Activated CD4-positive, alpha-beta T cell treated with anti-CD3 and anti-CD28 coated beads, Interleukin-2, amount 10 ng/mL, durations not matched to agents 24 days and 14 days (primary cell): ENCODE measurements at regions of chr12 and their contacts with region 1.

Region 1: DNA sequence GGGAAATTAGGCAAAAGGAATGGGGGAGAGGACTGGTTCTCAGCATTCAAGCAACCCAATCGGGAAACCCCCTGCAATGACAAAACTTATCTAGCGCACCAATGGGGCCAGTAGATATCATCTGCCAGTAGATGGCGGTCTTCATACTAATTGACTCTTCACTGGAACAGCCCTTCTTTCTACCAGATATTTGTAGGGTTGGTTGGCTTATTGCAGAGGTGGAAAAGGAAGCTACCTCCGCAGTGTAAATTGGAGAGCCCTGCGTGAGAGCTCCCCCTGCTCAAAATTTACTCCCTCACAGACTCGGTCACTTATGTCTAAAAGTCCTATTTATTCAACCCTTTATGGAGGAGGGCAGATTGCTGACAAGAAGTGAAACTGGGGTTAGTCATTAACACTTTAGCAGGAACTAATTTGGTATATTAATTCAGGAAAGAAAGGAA is 166.1 kb upstream of the CCND2 start:
- DNase-seq: peak; percentile 93
- H3K4me3 Mint-ChIP-seq: peak overlapping the region; percentile 47
- H3K27ac Mint-ChIP-seq: peak overlapping the region; percentile 83
- H3K4me1 Mint-ChIP-seq: peaks cover 42% of the 10 kb centered on the region
- H3K27me3 Mint-ChIP-seq: peaks cover 2% of the 10 kb centered on the region

Region 2: GRCh38 chr12:3998968-3999826 is 108.3 kb before region 1 on chr12:
- intact Hi-C with region 1: loop called (anchors 2 kb)
- DNase-seq: no peak
- H3K4me3 Mint-ChIP-seq: no peak overlapping the region
- H3K27ac Mint-ChIP-seq: no peak overlapping the region
- H3K4me1 Mint-ChIP-seq: peaks cover 5% of the 10 kb centered on the region
- H3K27me3 Mint-ChIP-seq: peaks cover 3% of the 10 kb centered on the region

Region 3: DNA sequence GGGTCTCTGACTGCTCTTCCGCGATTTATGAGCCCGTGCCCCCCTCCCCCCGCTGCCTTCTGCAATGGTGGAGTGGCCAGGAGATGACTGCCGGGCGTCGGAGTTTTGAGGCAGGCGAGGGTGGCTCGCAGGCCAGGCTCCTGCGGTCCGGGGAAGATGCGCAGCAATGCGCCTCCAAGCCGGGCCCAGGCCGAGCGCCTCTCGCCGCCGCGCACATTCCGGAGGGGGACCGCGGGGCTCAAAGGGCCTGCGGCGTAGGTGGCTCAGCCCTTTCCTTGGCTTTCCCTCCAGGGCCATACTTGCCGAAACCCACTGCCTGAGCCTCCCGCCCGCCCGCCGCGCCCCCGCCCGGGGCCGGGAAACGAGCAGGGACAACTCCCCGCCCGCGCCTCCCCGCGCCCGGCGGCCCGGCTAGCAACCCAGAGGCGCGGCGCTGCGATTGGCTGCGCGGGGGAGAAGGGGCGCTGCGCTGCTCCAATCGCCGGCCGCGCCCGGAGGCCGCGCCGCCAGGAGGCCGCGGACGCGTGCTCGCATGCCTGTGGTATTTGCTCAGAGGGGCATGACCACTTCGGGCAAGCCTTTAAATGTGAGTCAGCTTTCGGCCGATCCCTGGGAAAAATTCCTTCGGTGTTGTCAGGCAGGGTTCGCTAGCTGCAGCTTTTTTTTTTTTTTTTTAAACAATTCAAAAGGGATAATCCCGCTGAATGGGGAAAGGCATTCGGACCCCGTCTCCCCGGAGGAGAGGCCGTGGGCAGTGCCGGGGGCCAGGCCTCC is 76.3 kb before region 1 on chr12:
- intact Hi-C with region 1: loop called (anchors 2 kb)
- DNase-seq: peak; percentile 93
- H3K4me3 Mint-ChIP-seq: peak overlapping the region; percentile 70
- H3K27ac Mint-ChIP-seq: peak overlapping the region; percentile 17
- H3K4me1 Mint-ChIP-seq: peaks cover 34% of the 10 kb centered on the region
- H3K27me3 Mint-ChIP-seq: peaks cover 29% of the 10 kb centered on the region

Region 4: GRCh38 chr12:4135919-4136605 is 28.6 kb after region 1 on chr12:
- intact Hi-C with region 1: loop called (anchors 1 kb)
- DNase-seq: peak; percentile 75
- H3K4me3 Mint-ChIP-seq: peak overlapping the region; percentile 5
- H3K27ac Mint-ChIP-seq: peak overlapping the region; percentile 91
- H3K4me1 Mint-ChIP-seq: peaks cover 46% of the 10 kb centered on the region
- H3K27me3 Mint-ChIP-seq: no peaks in the 10 kb centered on the region